ENCODE measurements at regions of chr5 and their contacts with region 1.

Region 1: GRCh38 chr5:158174918-158175851 is 316.2 kb upstream of the CLINT1 start:
- DNase-seq: peak; percentile 90
- H3K4me3 ChIP-seq: no peak overlapping the region
- H3K27ac ChIP-seq: peak overlapping the region; percentile 31
- H3K4me1 ChIP-seq: peaks cover 49% of the 10 kb centered on the region
- CTCF ChIP-seq: peak; percentile 95

Region 2: GRCh38 chr5:158198636-158199035 is 23.5 kb after region 1 on chr5:
- CTCF ChIA-PET with region 1: interaction called, 3 read pairs
- POLR2A ChIA-PET with region 1: interaction called, 6 read pairs
- intact Hi-C with region 1: loop called (anchors 1 kb)
- DNase-seq: peak; percentile 91
- H3K4me3 ChIP-seq: peak overlapping the region; percentile 44
- H3K27ac ChIP-seq: peak overlapping the region; percentile 87
- H3K4me1 ChIP-seq: peaks cover 78% of the 10 kb centered on the region
- CTCF ChIP-seq: no peak

Region 3: GRCh38 chr5:158287643-158288271 is 112.6 kb after region 1 on chr5:
- CTCF ChIA-PET with region 1: interaction called, 3 read pairs
- POLR2A ChIA-PET with region 1: interaction called, 6 read pairs
- intact Hi-C with region 1: loop called (anchors 1 kb)
- DNase-seq: no peak
- H3K4me3 ChIP-seq: no peak overlapping the region
- H3K27ac ChIP-seq: no peak overlapping the region
- H3K4me1 ChIP-seq: peaks cover 22% of the 10 kb centered on the region
- CTCF ChIP-seq: no peak

Region 4: GRCh38 chr5:158511454-158511853 is 336.3 kb after region 1 on chr5:
- CTCF ChIA-PET with region 1: no interaction called
- POLR2A ChIA-PET with region 1: no interaction called
- intact Hi-C with region 1: loop called (anchors 5 kb)
- DNase-seq: peak; percentile 98
- H3K4me3 ChIP-seq: peak overlapping the region; percentile 27
- H3K27ac ChIP-seq: peak overlapping the region; percentile 95
- H3K4me1 ChIP-seq: peaks cover 47% of the 10 kb centered on the region
- CTCF ChIP-seq: no peak

Region 5: GRCh38 chr5:158770506-158770905 is 595.3 kb after region 1 on chr5:
- CTCF ChIA-PET with region 1: no interaction called
- POLR2A ChIA-PET with region 1: no interaction called
- intact Hi-C with region 1: loop called (anchors 5 kb)
- DNase-seq: peak; percentile 65
- H3K4me3 ChIP-seq: no peak overlapping the region
- H3K27ac ChIP-seq: peak overlapping the region; percentile 23
- H3K4me1 ChIP-seq: peaks cover 83% of the 10 kb centered on the region
- CTCF ChIP-seq: peak; percentile 82

Region 6: DNA sequence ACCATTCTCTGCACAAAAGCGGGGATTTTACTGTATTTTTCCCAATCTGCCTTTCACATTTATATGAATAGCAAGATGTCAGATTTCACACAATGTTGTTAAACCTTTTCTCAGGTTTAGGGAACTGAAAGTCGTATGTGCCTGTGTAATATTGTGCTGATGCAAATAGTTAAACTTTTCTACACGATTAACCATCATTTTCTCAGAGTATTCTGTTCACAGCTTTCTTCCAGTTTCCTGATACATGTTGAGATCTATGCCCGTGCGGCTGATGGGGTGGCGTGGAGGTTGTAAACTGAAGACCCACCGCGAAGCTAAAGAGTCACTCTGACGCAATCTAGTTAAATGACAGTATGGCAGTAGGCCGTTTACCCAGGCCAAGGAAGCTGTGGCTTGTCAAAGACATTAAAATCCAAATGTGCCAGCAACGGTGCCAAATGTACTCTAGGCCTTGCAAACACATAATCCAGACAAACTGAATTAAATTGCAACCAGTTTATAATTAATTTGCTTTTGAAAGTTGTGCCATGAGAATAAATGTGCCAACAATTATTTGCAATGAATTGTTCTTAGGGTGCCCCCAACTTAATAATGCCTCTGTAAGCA is 778.8 kb after region 1 on chr5:
- CTCF ChIA-PET with region 1: interaction called, 4 read pairs
- POLR2A ChIA-PET with region 1: interaction called, 3 read pairs
- intact Hi-C with region 1: loop called (anchors 5 kb)
- DNase-seq: peak; percentile 92
- H3K4me3 ChIP-seq: peak overlapping the region; percentile 53
- H3K27ac ChIP-seq: peak overlapping the region; percentile 98
- H3K4me1 ChIP-seq: peaks cover 88% of the 10 kb centered on the region
- CTCF ChIP-seq: no peak

Region 7: GRCh38 chr5:159133041-159133741 is 958.0 kb after region 1 on chr5:
- CTCF ChIA-PET with region 1: no interaction called
- POLR2A ChIA-PET with region 1: interaction called, 4 read pairs
- intact Hi-C with region 1: loop called (anchors 2 kb)
- DNase-seq: peak; percentile 70
- H3K4me3 ChIP-seq: no peak overlapping the region
- H3K27ac ChIP-seq: no peak overlapping the region
- H3K4me1 ChIP-seq: no peaks in the 10 kb centered on the region
- CTCF ChIP-seq: peak; percentile 93

Measured in OCI-LY7 (cell line).